ENCODE measurements at regions of chr9 and their contacts with region 1.

Region 1: GRCh38 chr9:113401027-113401792 is at the start of gene ALAD:
- DNase-seq: peak; percentile 99
- H3K4me3 Mint-ChIP-seq: peak within 1 kb of the TSS; percentile 92
- H3K27ac Mint-ChIP-seq: peak within 1 kb of the TSS; percentile 78
- H3K4me1 Mint-ChIP-seq: peaks cover 23% of the 10 kb centered on the region
- H3K27me3 Mint-ChIP-seq: no peaks in the 10 kb centered on the region
- total RNA-seq, gene ALAD: 25.1 to 29.0 TPM

Region 2: DNA sequence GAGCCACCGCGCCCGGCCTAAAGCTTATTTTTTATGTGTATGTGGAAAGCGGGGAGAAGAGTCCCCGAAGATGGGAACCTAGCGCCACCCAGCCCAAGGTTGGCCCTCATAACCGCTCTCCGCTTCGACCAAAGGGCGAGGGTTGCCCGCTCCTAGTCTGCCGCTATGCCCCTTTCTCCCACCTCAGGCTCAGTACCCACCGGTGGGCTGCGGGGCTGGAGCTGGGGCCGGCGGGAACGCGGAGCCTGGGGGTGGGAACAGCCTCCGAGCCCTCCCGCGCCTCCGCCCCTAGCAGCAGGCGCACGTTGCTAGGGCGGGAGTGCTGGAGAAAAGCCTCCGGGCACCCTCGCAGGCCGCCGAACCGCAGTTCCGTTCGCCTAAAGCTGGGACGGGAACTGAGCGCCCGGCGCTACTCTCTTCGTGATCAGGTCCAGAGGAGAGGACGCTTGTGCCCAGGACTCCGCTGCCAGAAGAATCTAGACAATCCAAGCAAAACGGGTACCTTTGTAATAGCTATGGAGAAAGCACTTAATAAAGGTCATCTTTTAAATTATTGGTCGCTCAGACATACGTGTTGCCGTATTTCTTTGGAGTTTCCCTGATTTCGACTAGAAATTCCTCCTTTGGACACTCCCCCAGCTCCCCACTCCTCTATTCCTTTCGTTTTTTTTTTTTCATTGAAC is 61.1 kb before region 1 on chr9 and contains the start of gene WDR31:
- CTCF ChIA-PET with region 1: interaction called, 13 read pairs
- POLR2A ChIA-PET with region 1: interaction called, 7 read pairs
- DNase-seq: peak; percentile 80
- H3K4me3 Mint-ChIP-seq: peak within 1 kb of the TSS; percentile 68
- H3K27ac Mint-ChIP-seq: no peak within 1 kb of the TSS
- H3K4me1 Mint-ChIP-seq: peaks cover 46% of the 10 kb centered on the region
- H3K27me3 Mint-ChIP-seq: no peaks in the 10 kb centered on the region
- total RNA-seq, gene WDR31: 0.85 to 1.4 TPM

Region 3: DNA sequence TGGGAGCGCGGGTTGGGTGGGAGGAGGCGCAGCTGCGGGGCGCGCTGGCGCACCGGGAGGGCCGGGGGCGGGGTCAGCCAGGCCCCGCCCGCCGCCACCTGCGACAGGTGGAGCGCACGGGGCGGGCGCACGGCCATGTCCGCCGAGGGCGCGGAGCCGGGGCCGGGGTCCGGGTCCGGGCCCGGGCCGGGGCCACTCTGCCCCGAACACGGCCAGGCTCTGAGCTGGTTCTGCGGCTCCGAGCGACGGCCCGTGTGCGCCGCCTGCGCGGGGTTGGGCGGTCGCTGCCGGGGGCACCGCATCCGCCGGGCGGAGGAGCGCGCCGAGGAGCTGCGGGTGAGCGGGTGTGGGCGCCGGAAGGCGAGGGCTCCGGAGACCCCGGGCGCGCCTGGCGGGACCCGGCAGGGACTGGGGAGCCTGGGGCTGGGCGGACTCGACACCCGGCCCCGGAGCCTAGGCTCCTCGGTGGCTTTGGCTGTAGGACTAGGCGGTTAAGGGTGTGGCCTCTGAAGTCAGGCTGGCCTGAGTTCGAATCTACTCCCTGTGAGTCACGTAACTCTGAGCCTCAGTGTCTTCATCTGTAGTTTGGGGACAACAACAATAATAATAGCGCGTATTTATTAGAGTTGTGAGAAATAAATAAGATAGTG is 51.6 kb before region 1 on chr9 and contains the start of gene BSPRY:
- CTCF ChIA-PET with region 1: interaction called, 37 read pairs
- POLR2A ChIA-PET with region 1: interaction called, 5 read pairs
- DNase-seq: peak; percentile 53
- H3K4me3 Mint-ChIP-seq: peak within 1 kb of the TSS; percentile 82
- H3K27ac Mint-ChIP-seq: peak within 1 kb of the TSS; percentile 63
- H3K4me1 Mint-ChIP-seq: peaks cover 52% of the 10 kb centered on the region
- H3K27me3 Mint-ChIP-seq: peaks cover 11% of the 10 kb centered on the region
- total RNA-seq, gene BSPRY: 7.1 to 7.3 TPM

Region 4: DNA sequence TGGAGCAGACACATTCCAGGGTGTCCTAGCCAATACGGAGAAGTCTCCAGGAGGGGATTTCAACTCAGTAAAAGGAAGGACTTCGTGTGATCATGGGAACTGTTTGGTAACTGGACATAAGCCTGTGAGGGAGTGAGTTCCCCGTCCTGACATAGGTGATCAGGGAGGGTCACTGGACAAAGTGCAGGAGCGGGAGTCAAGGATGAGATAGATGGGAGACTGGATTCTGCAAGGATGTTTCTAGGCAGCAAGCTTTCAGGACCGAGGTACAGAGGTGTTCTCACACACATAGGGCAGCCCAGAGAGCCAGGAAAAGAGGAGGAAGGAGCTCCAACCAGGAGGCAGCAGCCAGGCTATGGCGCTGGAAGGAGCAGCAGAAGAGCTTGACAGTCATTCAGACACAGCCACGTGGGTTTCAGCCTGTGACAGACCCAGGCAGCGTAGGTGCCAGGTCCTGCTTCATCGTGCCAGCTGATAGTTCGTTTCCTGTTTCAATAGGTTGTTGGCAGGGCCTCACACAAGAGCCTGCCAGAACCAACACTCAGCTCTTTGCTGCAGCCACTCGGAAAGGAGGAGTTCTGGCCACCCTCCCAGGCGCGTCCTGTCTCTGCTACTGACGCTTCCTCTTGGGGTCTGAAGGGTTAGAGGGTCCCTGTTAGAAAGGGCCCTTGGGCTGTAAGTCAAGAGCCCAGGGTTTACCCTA is 592.8 kb after region 1 on chr9:
- CTCF ChIA-PET with region 1: no interaction called
- POLR2A ChIA-PET with region 1: no interaction called
- DNase-seq: no peak
- H3K4me3 Mint-ChIP-seq: no peak overlapping the region
- H3K27ac Mint-ChIP-seq: no peak overlapping the region
- H3K4me1 Mint-ChIP-seq: no peaks in the 10 kb centered on the region
- H3K27me3 Mint-ChIP-seq: no peaks in the 10 kb centered on the region